Dendritic cell treated with granulocyte-macrophage colony-stimulating factor and Interleukin-4, amounts not matched to agents 40 ng/mL and 50 ng/mL, for 4 days (primary cell): ENCODE measurements at regions of chr9 and their contacts with region 1.

Region 1: GRCh38 chr9:21789541-21790037 is 12.8 kb upstream of the MTAP start:
- H3K4me3 Mint-ChIP-seq: peak overlapping the region; percentile 64
- H3K27ac Mint-ChIP-seq: no peak overlapping the region
- H3K4me1 Mint-ChIP-seq: peaks cover 9% of the 10 kb centered on the region
- H3K27me3 Mint-ChIP-seq: peaks cover 7% of the 10 kb centered on the region

Region 2: GRCh38 chr9:21239911-21240310 is 549.7 kb before region 1 on chr9 and contains the start of gene IFNA14:
- intact Hi-C with region 1: loop called (anchors 1 kb)
- H3K4me3 Mint-ChIP-seq: no peak within 1 kb of the TSS
- H3K27ac Mint-ChIP-seq: no peak within 1 kb of the TSS
- H3K4me1 Mint-ChIP-seq: peaks cover 18% of the 10 kb centered on the region
- H3K27me3 Mint-ChIP-seq: peaks cover 54% of the 10 kb centered on the region

Region 3: DNA sequence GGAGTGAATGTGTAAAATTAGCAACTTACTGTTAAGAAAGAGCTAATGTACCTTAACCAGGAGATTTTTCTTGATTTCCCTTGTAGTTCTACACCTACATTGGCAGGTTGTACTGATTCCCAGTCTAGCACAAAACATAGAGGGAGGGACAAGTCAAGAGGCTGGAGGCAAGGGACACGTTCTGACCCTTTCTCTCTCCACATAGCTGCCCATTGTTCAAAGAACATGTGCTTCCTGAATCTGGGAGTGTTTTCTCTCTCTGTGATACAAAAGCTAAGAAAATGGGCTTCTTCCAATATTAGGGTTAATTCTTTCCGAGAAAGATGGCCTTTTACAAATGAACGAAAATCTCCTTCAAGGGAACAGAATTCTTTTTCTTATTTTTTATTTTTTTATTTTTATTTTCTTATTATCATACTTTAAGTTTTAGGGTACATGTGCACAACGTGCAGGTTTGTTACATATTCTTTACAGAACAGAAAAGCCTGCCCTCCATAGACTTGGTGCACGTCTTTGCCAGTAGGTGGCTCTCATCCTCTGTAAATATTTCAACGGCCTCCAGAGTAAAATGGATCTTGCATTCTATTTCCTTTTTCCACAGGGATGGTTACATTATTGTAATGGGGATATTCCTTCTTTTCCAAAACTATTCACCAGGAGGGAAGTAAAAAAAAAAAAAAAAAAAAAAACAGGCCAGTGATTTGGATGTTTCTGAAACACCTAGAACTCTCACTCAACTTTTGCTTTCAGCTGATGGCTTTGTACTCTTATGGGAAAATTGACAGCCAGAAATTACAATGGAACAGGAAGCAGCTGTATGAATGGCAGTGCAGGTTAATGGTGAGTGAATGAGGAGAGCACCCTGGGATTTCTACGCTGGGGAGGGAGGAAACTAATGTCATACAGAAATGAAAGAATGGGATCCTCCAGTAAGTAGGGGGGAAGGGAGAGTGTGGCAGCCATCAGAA is 471.3 kb before region 1 on chr9:
- intact Hi-C with region 1: loop called (anchors 2 kb)
- H3K4me3 Mint-ChIP-seq: no peak overlapping the region
- H3K27ac Mint-ChIP-seq: no peak overlapping the region
- H3K4me1 Mint-ChIP-seq: peaks cover 9% of the 10 kb centered on the region
- H3K27me3 Mint-ChIP-seq: peaks cover 14% of the 10 kb centered on the region

Region 4: GRCh38 chr9:21465859-21466518 is 323.6 kb before region 1 on chr9:
- intact Hi-C with region 1: loop called (anchors 1 kb)
- H3K4me3 Mint-ChIP-seq: no peak overlapping the region
- H3K27ac Mint-ChIP-seq: no peak overlapping the region
- H3K4me1 Mint-ChIP-seq: no peaks in the 10 kb centered on the region
- H3K27me3 Mint-ChIP-seq: peaks cover 17% of the 10 kb centered on the region

Region 5: DNA sequence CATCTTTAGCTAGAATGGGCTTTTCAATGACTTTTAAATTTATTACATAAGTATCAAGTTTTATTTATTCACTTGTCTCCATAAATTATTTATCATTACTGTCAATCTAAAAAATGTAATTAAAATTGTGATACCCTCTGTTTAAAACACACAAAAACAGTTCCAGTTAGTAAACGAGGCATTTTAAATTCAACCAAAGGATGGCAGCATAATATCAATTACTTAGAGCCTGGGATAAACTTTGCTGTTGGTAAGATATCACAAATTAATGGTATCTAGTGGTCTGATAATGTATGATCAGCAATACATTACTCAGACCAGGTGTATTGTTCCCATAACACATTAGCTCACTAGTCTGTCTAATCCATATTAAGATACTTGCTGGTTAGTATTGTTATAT is 297.8 kb before region 1 on chr9:
- intact Hi-C with region 1: no loop called
- H3K4me3 Mint-ChIP-seq: no peak overlapping the region
- H3K27ac Mint-ChIP-seq: no peak overlapping the region
- H3K4me1 Mint-ChIP-seq: no peaks in the 10 kb centered on the region
- H3K27me3 Mint-ChIP-seq: peaks cover 21% of the 10 kb centered on the region

Region 6: DNA sequence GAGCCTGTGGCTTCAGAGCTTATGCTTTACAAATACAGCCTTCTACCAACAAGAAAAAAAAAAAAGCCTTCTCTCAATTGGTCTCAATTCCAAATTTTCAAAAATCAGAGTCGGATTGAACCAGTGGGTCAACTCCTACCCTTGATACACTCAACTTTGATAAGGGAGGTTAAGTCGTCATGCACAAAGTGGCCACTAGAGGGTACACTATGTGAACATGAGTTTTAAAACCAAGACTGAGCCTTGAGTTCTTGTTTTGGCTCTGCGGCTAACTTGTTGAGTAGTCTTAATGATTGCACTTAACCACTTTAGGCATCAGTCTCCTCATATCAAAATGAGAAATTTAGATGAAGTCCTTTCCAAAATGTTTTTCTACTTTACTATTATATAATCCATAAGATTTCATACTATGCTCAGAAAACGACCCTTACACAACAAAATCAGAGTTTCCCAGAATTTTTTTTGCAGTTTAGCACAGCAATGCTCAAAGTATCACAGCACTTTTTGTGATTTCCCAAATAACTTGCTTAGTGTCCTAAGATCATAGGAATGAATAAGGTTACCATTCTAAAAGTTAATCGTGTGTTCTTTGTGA is 80.0 kb before region 1 on chr9:
- intact Hi-C with region 1: loop called (anchors 1 kb)
- H3K4me3 Mint-ChIP-seq: no peak overlapping the region
- H3K27ac Mint-ChIP-seq: no peak overlapping the region
- H3K4me1 Mint-ChIP-seq: no peaks in the 10 kb centered on the region
- H3K27me3 Mint-ChIP-seq: peaks cover 7% of the 10 kb centered on the region

Region 7: GRCh38 chr9:21812946-21813568 is 23.5 kb after region 1 on chr9:
- intact Hi-C with region 1: no loop called
- H3K4me3 Mint-ChIP-seq: no peak overlapping the region
- H3K27ac Mint-ChIP-seq: no peak overlapping the region
- H3K4me1 Mint-ChIP-seq: peaks cover 19% of the 10 kb centered on the region
- H3K27me3 Mint-ChIP-seq: no peaks in the 10 kb centered on the region